Activated naive CD4-positive, alpha-beta T cell treated with anti-CD3 and anti-CD28 coated beads for 36 hours (primary cell): ENCODE measurements at regions of chr4 and their contacts with region 1.

Region 1: GRCh38 chr4:93791570-93792195 is 36.9 kb upstream of the ATOH1 start:
- DNase-seq: peak; percentile 60
- H3K4me3 Mint-ChIP-seq: no peak overlapping the region
- H3K27ac Mint-ChIP-seq: no peak overlapping the region
- H3K4me1 Mint-ChIP-seq: no peaks in the 10 kb centered on the region
- H3K27me3 Mint-ChIP-seq: peaks cover 4% of the 10 kb centered on the region

Region 2: GRCh38 chr4:94127707-94128328 is 336.1 kb after region 1 on chr4:
- CTCF ChIA-PET with region 1: no interaction called
- intact Hi-C with region 1: loop called (anchors 1 kb)
- DNase-seq: no peak
- H3K4me3 Mint-ChIP-seq: no peak overlapping the region
- H3K27ac Mint-ChIP-seq: no peak overlapping the region
- H3K4me1 Mint-ChIP-seq: no peaks in the 10 kb centered on the region
- H3K27me3 Mint-ChIP-seq: peaks cover 5% of the 10 kb centered on the region

Region 3: GRCh38 chr4:94256828-94257227 is 465.1 kb after region 1 on chr4:
- CTCF ChIA-PET with region 1: no interaction called
- intact Hi-C with region 1: loop called (anchors 2 kb)
- DNase-seq: no peak
- H3K4me3 Mint-ChIP-seq: no peak overlapping the region
- H3K27ac Mint-ChIP-seq: no peak overlapping the region
- H3K4me1 Mint-ChIP-seq: peaks cover 2% of the 10 kb centered on the region
- H3K27me3 Mint-ChIP-seq: no peaks in the 10 kb centered on the region

Region 4: DNA sequence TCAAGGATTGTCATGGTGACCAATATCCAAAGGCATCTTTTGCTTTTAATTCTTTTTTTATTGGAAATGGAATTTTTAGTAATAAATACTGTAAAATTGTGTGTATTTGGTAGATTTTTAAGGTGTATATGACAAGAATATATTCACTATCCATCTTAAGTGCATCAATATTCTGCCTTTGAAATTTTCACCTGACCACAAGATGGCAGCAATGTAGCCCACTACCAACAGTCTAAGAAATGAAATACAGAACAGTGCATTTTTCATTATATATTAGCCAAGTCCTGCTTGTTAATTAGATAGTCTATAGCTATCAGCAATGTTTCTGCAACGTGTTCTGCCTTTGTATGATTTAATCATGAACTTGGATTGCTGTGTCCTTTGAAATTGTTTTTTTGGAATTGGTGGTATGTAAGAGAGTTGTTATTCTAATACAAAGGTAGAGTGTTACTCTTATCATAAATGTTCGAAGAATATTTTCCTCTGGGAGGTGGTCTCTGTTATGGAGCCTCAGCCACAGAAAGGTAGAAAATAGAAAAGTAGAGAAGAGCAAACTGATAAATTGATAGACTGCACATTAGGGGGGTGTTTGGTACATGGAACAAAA is 512.8 kb after region 1 on chr4:
- CTCF ChIA-PET with region 1: no interaction called
- intact Hi-C with region 1: loop called (anchors 5 kb)
- DNase-seq: peak; percentile 40
- H3K4me3 Mint-ChIP-seq: no peak overlapping the region
- H3K27ac Mint-ChIP-seq: no peak overlapping the region
- H3K4me1 Mint-ChIP-seq: no peaks in the 10 kb centered on the region
- H3K27me3 Mint-ChIP-seq: no peaks in the 10 kb centered on the region

Region 5: GRCh38 chr4:94390804-94391410 is 599.2 kb after region 1 on chr4:
- CTCF ChIA-PET with region 1: no interaction called
- intact Hi-C with region 1: loop called (anchors 1 kb)
- DNase-seq: peak; percentile 47
- H3K4me3 Mint-ChIP-seq: no peak overlapping the region
- H3K27ac Mint-ChIP-seq: no peak overlapping the region
- H3K4me1 Mint-ChIP-seq: no peaks in the 10 kb centered on the region
- H3K27me3 Mint-ChIP-seq: peaks cover 7% of the 10 kb centered on the region

Region 6: GRCh38 chr4:95095348-95095974 is 1303.8 kb after region 1 on chr4:
- CTCF ChIA-PET with region 1: no interaction called
- intact Hi-C with region 1: loop called (anchors 10 kb)
- DNase-seq: peak; percentile 8
- H3K4me3 Mint-ChIP-seq: no peak overlapping the region
- H3K27ac Mint-ChIP-seq: no peak overlapping the region
- H3K4me1 Mint-ChIP-seq: peaks cover 4% of the 10 kb centered on the region
- H3K27me3 Mint-ChIP-seq: peaks cover 3% of the 10 kb centered on the region

Region 7: DNA sequence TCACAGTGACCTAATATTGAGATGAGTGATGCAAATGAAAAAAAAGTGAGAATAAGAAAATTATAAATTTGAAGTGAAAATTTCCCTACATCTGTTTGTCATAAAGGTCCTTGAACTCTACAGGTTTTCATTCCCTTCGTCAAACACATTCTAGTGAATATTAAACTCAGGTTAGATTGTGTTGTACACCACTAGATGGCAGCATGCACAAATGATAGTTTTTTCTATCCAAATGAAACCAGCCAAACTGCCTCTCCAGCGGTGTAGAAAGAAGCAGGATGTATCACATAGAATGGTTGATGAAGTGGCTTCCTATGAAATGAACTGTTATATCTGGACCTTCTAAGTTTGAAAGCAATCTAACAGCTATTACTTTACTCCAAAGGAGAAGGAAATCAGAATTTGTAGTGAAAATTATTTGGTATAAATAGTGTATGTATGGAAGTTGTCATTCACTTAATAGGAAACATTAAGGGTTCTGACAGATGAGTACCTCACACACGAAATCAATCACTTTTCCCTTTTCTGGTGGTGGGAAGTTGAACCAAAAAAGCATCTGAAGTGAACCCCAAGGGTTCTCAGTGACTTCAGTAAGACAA is 1374.3 kb after region 1 on chr4:
- CTCF ChIA-PET with region 1: no interaction called
- intact Hi-C with region 1: no loop called
- DNase-seq: peak; percentile 41
- H3K4me3 Mint-ChIP-seq: no peak overlapping the region
- H3K27ac Mint-ChIP-seq: no peak overlapping the region
- H3K4me1 Mint-ChIP-seq: no peaks in the 10 kb centered on the region
- H3K27me3 Mint-ChIP-seq: no peaks in the 10 kb centered on the region